Motor neuron (in vitro differentiated cells): ENCODE measurements at regions of chr12 and their contacts with region 1.

Region 1: GRCh38 chr12:96061864-96062453 is 26.6 kb upstream of the LTA4H start:
- ATAC-seq: peak; percentile 50 to 100 (median 60)
- H3K4me3 ChIP-seq: no peak overlapping the region
- H3K27ac ChIP-seq: no peak overlapping the region
- H3K4me1 ChIP-seq: no peaks in the 10 kb centered on the region

Region 2: GRCh38 chr12:96219698-96220206 is 157.8 kb after region 1 on chr12:
- in situ Hi-C with region 1: loop called in 8 of 9 experiments (anchors 10 to 25 kb)
- ATAC-seq: peak in 4 of 8 experiments; percentile 50 to 99 (median 90)
- H3K4me3 ChIP-seq: no peak overlapping the region
- H3K27ac ChIP-seq: no peak overlapping the region
- H3K4me1 ChIP-seq: peaks cover 12 to 21% of the 10 kb centered on the region in 2 donors

Region 3: DNA sequence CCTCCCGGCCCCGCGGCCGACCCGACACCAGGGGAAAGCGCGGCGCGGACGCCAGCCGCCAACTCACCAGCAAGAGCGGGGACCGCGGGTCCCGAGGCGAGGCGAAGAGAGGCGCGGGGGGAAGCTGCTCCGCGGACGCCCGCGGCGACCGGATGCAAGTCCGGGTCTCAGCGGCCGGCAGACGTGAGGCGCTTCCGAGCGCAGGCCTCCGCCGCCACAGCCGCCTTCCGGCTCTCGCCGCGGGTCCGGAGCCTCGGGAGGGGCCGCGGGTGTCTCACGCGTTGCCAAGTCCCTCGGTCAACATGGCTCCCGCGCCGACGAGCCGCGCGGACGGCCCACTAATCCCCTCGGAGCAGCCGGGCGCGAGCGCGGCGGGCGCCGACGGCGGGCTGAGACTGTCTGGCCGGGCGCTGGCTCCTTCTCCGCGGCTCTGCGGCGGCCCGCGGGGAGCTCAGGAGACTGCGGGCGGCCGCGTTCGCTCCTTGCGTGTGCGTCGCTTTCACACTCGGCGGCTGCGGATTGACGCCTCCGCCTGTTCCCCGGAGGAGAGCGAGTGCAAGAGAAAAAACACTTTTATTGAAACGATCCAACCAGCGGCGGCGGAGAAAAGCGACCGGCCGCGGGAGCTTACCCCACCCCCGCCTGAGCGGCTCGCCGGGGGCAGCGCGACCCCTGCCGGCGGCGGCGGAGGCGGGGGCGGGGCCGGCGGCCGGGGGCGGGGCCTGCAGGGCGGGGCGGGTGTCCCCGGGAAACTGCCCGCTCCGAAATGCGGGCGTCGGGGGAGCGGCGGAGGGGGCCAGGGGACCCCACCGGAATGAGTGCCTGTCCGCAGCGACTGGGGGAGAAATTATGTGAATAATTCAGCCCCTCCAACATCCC is 338.2 kb after region 1 on chr12 and contains the start of gene CDK17:
- in situ Hi-C with region 1: loop called in 1 of 9 experiments (anchors 25 kb)
- ATAC-seq: peak; percentile 51 to 79 (median 76)
- H3K4me3 ChIP-seq: peak within 1 kb of the TSS; percentile 54 to 91 (median 73)
- H3K27ac ChIP-seq: peak within 1 kb of the TSS; percentile 93 to 97
- H3K4me1 ChIP-seq: peaks cover 2 to 25% of the 10 kb centered on the region in 2 donors
- total RNA-seq, gene CDK17: 28.5 to 61.1 (median 45.5) TPM

Region 4: DNA sequence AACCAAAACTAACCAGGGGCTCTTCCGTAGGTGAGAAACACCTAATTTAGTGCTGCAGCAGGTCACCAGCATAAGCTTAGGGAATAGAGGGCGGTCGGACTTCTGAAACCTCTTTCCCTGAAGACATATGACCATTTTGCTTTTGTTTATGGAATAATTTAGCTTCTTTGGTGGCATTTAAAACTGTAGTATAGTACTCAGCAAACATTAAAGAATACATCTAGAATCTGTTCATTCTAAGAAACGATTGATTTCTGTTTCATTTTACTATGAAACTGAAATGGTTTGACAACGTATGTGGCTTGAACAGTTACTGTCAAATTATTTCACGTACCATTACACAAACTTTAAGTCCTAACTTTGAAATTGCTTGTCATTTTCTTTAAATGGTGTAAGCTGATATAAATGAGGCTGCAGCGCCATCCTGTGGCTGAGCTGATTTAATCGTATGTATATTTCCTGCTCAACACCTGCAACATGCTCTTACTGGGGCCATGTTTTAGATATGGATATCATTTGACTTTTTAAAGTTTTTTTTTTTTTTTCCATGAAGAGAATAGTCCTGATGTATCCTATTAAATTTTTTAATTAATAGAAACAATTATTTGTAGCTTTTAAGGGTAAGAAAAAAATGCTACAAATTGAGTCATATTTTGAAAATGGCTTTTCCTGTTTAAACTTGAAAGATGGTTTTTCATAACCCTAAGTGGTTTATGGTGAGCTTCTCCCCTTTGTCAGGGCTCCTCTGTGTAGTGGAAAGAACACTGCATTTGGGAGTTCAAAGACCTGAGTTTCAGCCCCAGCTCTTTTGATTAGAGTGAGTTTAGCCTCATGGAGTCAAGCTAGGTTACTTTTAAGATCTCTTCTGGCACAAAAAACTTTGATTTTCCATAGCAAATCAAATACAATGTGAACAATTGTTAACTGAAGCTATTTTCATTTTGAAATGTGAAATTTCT is 454.8 kb after region 1 on chr12:
- in situ Hi-C with region 1: loop called (anchors 10 to 25 kb)
- ATAC-seq: peak in 5 of 8 experiments; percentile 32 to 78 (median 71)
- H3K4me3 ChIP-seq: no peak overlapping the region
- H3K27ac ChIP-seq: no peak overlapping the region
- H3K4me1 ChIP-seq: peaks cover under 1 to 6% of the 10 kb centered on the region in 2 donors